Dorsolateral prefrontal cortex (tissue), 120 donors: ENCODE measurements at regions of chr7 and their contacts with region 1.

Region 1: DNA sequence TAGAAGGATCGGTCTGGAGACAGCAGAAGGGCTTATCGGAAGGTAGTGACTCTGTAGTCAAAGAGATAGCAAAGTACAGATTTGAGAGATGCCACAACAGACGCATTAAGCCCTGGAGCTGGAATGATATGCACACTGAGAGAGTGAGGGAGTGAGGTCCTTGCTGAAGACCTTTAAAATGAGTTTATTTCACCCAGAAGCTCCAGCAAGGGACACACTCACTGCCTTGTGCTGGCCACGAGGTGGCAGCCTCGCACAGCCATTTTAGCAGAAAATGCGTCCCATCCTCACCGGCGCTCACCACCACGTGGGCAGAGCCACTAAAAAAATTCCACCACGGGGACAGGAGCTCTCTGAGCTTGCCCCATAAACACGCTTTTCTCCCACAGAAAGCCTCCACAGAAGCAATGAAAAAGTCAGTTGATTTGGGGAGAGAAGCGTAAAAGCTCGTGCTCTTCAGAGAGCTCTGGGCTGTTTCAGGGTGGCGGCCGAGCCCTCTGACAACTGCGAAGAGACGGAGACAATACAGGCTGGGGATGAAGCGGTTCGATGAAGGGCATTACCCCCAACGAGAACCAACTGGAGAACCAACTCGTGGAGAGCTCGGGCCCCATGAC is 163.0 kb upstream of the KLF14 start:
- DNase-seq: peak; percentile 64 to 87 (median 80)
- H3K4me3 ChIP-seq: peak overlapping the region in 2 of 59 donors; percentile 23 to 33
- H3K27ac ChIP-seq: peak overlapping the region in 55 of 59 donors; percentile 12 to 95 (median 76)
- H3K27me3 ChIP-seq: no peaks in the 10 kb centered on the region
- CTCF ChIP-seq: peak; percentile 69 to 97 (median 92)

Region 2: DNA sequence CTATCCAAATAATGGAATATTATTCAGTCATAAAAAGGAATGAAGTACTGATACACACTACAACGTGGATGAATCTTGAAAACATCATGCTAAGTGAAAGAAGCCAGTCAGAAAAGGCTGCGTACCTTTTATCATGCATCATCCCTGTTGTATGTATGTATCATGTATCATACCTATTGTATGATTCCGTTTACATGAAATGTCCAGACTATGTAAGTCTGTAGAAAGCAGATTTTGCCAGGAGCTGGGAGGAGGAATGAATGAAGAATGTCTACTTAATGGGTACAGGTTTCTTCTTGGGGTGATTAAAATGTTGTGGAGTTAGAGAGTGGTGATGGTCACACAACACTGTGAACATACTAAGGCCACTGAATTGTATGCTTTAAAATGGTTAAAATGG is 27.1 kb before region 1 on chr7:
- intact Hi-C with region 1: loop called in 1 of 2 experiments (anchors 1 kb)
- DNase-seq: no peak
- H3K4me3 ChIP-seq: no peak overlapping the region
- H3K27ac ChIP-seq: peak overlapping the region in 1 of 59 donors; percentile 2
- H3K27me3 ChIP-seq: no peaks in the 10 kb centered on the region
- CTCF ChIP-seq: no peak

Region 3: GRCh38 chr7:131031099-131031868 is 134.3 kb after region 1 on chr7:
- intact Hi-C with region 1: loop called in 1 of 2 experiments (anchors 10 kb)
- DNase-seq: no peak
- H3K4me3 ChIP-seq: peak overlapping the region in 1 of 59 donors; percentile 2
- H3K27ac ChIP-seq: peak overlapping the region in 6 of 59 donors; percentile 1 to 32 (median 15)
- H3K27me3 ChIP-seq: no peaks in the 10 kb centered on the region
- CTCF ChIP-seq: no peak

Region 4: GRCh38 chr7:131424219-131424822 is 527.3 kb after region 1 on chr7:
- intact Hi-C with region 1: loop called in 1 of 2 experiments (anchors 10 kb)
- DNase-seq: no peak
- H3K4me3 ChIP-seq: no peak overlapping the region
- H3K27ac ChIP-seq: peak overlapping the region in 57 of 59 donors; percentile 13 to 94 (median 85)
- H3K27me3 ChIP-seq: no peaks in the 10 kb centered on the region
- CTCF ChIP-seq: peak; percentile 59 to 90 (median 79)

Region 5: DNA sequence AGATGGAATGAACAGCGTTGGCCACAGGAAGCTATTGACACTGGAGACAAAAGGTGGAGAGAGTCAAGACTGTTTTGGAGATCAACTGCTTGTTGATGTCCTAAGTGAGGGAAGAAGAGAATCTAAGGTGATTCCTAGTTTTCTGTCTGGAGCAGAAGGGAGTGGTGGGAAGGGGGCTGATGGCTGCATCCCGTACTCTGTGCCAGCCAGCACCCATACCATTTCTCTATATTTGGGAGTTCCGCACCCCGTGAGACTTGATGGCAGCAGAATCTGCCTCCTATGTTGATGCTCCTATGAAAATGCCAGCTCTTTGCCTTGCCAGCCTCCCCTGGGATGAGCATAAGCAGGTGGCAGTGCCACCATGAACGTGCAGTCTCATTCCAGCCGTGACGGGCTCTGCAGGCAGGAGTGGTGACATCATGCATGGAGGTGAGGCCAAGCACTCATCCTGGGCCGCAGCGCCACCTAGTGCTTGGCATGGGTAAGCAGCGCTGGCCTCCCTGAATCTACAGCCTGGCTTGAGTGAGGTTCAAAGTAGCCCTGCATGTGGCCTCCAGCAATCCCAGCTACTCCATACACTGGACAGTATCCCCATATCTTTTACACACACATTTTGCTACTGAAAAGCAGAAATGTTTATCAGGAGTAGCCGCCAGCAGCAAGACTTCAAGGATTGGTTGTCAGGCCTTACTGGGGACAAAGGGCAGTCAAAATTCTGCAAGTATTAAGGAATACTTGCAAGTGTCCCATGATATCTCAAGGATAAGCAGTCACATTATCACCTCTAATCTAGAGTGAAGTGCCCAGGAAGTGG is 616.4 kb after region 1 on chr7:
- intact Hi-C with region 1: loop called (anchors 5 to 10 kb)
- DNase-seq: peak; percentile 74 to 88 (median 84)
- H3K4me3 ChIP-seq: peak overlapping the region in 15 of 59 donors; percentile 4 to 47 (median 25)
- H3K27ac ChIP-seq: peak overlapping the region in 43 of 59 donors; percentile 3 to 81 (median 48)
- H3K27me3 ChIP-seq: no peaks in the 10 kb centered on the region
- CTCF ChIP-seq: peak; percentile 63 to 98 (median 94)